B cell (primary cell): ENCODE measurements at regions of chr18 and their contacts with region 1.

Region 1: GRCh38 chr18:32868406-32868805 is 95.6 kb upstream of the KLHL14 start:
- DNase-seq: peak; percentile 72
- ATAC-seq: peak; percentile 56
- H3K4me3 ChIP-seq: peak overlapping the region in 2 of 5 experiments; percentile 32 to 57
- H3K4me3 Mint-ChIP-seq: peak overlapping the region; percentile 69
- H3K27ac ChIP-seq: peak overlapping the region; percentile 88 to 90
- H3K27ac Mint-ChIP-seq: peak overlapping the region; percentile 86
- H3K4me1 ChIP-seq: peaks cover 69 to 74% of the 10 kb centered on the region in 2 donors
- H3K4me1 Mint-ChIP-seq: peaks cover 76% of the 10 kb centered on the region
- H3K27me3 ChIP-seq: no peaks in the 10 kb centered on the region
- H3K27me3 Mint-ChIP-seq: no peaks in the 10 kb centered on the region
- CTCF ChIP-seq: no peak

Region 2: DNA sequence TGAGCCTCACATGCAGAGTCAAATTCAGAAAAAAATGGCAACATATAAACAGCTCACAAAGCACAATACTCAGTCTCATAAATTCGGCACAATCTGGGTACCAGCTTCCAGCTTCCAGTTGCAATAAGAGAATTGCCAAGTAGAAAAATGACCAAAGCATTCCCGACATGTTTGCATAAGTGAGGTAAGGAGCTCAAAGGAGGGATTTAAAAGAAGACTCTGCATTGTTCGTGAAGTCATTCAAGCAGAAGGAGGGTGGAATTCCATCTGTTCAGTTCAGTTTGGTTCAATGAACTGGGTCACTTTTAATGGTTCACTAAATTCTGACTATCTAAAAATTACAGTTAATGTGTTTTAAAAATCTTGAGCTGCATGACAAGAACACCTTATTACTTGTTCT is 11.1 kb after region 1 on chr18:
- CTCF ChIA-PET with region 1: interaction called, 14 read pairs
- POLR2A ChIA-PET with region 1: no interaction called
- intact Hi-C with region 1: loop called (anchors 1 kb)
- DNase-seq: no peak
- ATAC-seq: no peak
- H3K4me3 ChIP-seq: peak overlapping the region in 1 of 5 experiments; percentile 25
- H3K4me3 Mint-ChIP-seq: peak overlapping the region; percentile 32
- H3K27ac ChIP-seq: peak overlapping the region; percentile 65 to 67
- H3K27ac Mint-ChIP-seq: peak overlapping the region; percentile 10
- H3K4me1 ChIP-seq: peaks cover 69 to 74% of the 10 kb centered on the region in 2 donors
- H3K4me1 Mint-ChIP-seq: peaks cover 87% of the 10 kb centered on the region
- H3K27me3 ChIP-seq: no peaks in the 10 kb centered on the region
- H3K27me3 Mint-ChIP-seq: no peaks in the 10 kb centered on the region
- CTCF ChIP-seq: no peak

Region 3: GRCh38 chr18:32899819-32900218 is 31.4 kb after region 1 on chr18:
- CTCF ChIA-PET with region 1: no interaction called
- POLR2A ChIA-PET with region 1: no interaction called
- intact Hi-C with region 1: loop called (anchors 5 kb)
- DNase-seq: no peak
- ATAC-seq: no peak
- H3K4me3 ChIP-seq: no peak overlapping the region
- H3K4me3 Mint-ChIP-seq: no peak overlapping the region
- H3K27ac ChIP-seq: no peak overlapping the region
- H3K27ac Mint-ChIP-seq: no peak overlapping the region
- H3K4me1 ChIP-seq: peaks cover 15 to 19% of the 10 kb centered on the region in 2 donors
- H3K4me1 Mint-ChIP-seq: peaks cover 25% of the 10 kb centered on the region
- H3K27me3 ChIP-seq: no peaks in the 10 kb centered on the region
- H3K27me3 Mint-ChIP-seq: no peaks in the 10 kb centered on the region
- CTCF ChIP-seq: no peak